CD4-positive, alpha-beta memory T cell (primary cell): ENCODE measurements at regions of chr1 and their contacts with region 1.

Region 1: DNA sequence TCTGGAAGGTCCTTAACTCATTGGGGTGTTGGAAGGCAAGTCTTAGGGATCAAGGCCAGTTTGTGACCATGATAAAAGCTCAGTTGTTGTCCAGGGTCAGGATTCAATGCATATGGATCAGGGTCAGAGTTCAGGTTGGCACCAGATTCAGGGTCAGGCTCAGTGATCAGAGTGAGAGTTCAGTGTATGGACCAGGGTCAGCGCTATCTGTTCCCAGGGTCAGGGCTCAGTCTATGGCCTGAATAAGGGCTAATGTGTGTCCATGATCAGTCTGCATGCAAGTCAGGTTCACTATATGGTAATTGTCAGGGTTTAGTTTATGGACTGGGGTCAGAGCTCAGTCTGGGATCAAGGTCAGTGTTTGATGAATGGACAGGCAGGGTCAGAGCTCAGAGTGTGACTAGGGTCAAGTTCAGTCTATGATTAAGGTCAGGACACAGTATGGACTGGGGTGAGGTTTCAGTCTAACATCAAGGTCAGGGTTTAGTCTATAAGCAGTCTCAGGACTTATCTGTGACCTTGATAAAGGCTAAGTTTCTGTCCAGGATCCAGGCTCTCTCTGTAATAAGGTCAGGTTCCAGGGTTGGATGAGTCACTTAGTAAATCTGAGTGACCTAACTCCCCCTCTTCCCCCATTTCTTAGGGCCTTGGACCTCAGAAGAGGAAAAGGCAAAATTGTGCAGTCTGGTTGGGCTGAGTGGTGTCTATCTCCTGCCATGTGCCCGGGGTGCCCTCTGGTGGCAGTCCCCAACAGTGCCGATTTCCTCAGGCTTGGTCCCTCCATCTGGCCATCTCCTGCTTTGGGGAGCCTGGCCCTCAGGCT is 23.8 kb downstream of the KNCN start:
- DNase-seq: peak; percentile 61 to 69 (median 64)
- H3K4me3 ChIP-seq: no peak overlapping the region
- H3K4me3 Mint-ChIP-seq: peak overlapping the region in 2 of 8 donors; percentile 7 to 45
- H3K27ac ChIP-seq: no peak overlapping the region
- H3K27ac Mint-ChIP-seq: peak overlapping the region in 1 of 7 donors; percentile 71
- H3K4me1 ChIP-seq: peaks cover 1% of the 10 kb centered on the region
- H3K4me1 Mint-ChIP-seq: peaks cover 1 to 16% (median 5%) of the 10 kb centered on the region in 4 donors
- H3K27me3 ChIP-seq: no peaks in the 10 kb centered on the region
- H3K27me3 Mint-ChIP-seq: peaks cover 19 to 26% of the 10 kb centered on the region in 2 donors

Region 2: GRCh38 chr1:46406881-46407608 is 120.6 kb before region 1 on chr1:
- CTCF ChIA-PET with region 1: interaction called, 39 read pairs
- POLR2A ChIA-PET with region 1: no interaction called
- intact Hi-C with region 1: loop called (anchors 1 kb)
- DNase-seq: no peak
- H3K4me3 ChIP-seq: no peak overlapping the region
- H3K4me3 Mint-ChIP-seq: peak overlapping the region in 3 of 8 donors; percentile 38 to 58 (median 41)
- H3K27ac ChIP-seq: no peak overlapping the region
- H3K27ac Mint-ChIP-seq: peak overlapping the region in 6 of 7 donors; percentile 9 to 79 (median 60)
- H3K4me1 ChIP-seq: peaks cover 16% of the 10 kb centered on the region
- H3K4me1 Mint-ChIP-seq: peaks cover 4 to 8% (median 7%) of the 10 kb centered on the region in 4 donors
- H3K27me3 ChIP-seq: no peaks in the 10 kb centered on the region
- H3K27me3 Mint-ChIP-seq: no peaks in the 10 kb centered on the region

Region 3: DNA sequence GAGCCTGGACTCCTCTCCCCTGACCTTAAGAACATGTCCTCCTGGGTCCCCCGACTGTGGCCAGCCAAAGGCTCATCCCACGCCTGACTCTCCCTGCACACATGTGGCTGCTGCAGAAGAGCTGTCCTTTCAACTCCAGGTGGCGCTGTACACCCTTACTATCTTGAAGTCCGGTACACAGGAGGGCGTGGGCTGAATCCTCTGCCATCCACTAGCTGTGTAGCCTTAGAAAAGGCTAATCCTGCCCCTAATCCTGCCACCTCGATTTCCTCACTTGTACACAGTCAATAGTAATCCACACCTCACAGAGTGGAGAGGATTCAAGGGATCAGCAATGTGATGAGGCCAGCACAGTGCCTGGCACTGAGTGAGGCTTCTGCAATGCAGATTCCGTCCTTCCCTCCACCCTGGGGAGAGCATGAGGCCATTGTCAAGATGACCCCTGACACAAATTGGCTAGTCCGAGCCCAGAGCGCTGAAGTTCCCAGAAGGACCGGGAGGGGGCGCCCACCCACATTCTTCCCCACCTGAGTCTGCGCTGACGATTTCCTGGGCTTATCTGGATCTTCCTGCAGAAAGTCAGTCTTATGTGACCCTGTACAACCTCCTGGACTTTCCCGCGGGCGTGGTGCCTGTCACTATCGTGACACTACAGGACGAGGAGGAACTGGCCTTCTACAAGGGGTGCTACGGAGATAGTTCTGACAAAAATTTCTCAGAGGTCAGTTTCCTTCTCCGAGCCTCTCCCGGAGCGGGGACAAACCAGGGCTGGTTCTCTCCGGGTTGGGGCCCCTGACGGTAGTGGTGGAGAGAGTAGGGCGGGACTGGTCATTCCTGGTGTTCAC is 85.1 kb before region 1 on chr1:
- CTCF ChIA-PET with region 1: interaction called, 67 read pairs
- POLR2A ChIA-PET with region 1: no interaction called
- intact Hi-C with region 1: loop called (anchors 1 kb)
- DNase-seq: peak; percentile 57 to 64 (median 59)
- H3K4me3 ChIP-seq: peak overlapping the region; percentile 63 to 66
- H3K4me3 Mint-ChIP-seq: peak overlapping the region; percentile 85 to 92 (median 88)
- H3K27ac ChIP-seq: no peak overlapping the region
- H3K27ac Mint-ChIP-seq: peak overlapping the region in 6 of 7 donors; percentile 46 to 85 (median 70)
- H3K4me1 ChIP-seq: peaks cover 15% of the 10 kb centered on the region
- H3K4me1 Mint-ChIP-seq: peaks cover 14 to 32% (median 17%) of the 10 kb centered on the region in 4 donors
- H3K27me3 ChIP-seq: peaks cover under 1% of the 10 kb centered on the region
- H3K27me3 Mint-ChIP-seq: peaks cover 14 to 15% of the 10 kb centered on the region in 2 donors

Region 4: GRCh38 chr1:46512135-46512791 is 15.4 kb before region 1 on chr1:
- CTCF ChIA-PET with region 1: interaction called, 11 read pairs
- POLR2A ChIA-PET with region 1: no interaction called
- intact Hi-C with region 1: no loop called
- DNase-seq: no peak
- H3K4me3 ChIP-seq: no peak overlapping the region
- H3K4me3 Mint-ChIP-seq: no peak overlapping the region
- H3K27ac ChIP-seq: no peak overlapping the region
- H3K27ac Mint-ChIP-seq: no peak overlapping the region
- H3K4me1 ChIP-seq: no peaks in the 10 kb centered on the region
- H3K4me1 Mint-ChIP-seq: peaks cover 0 to 4% (median under 1%) of the 10 kb centered on the region in 4 donors
- H3K27me3 ChIP-seq: no peaks in the 10 kb centered on the region
- H3K27me3 Mint-ChIP-seq: peaks cover 18 to 51% of the 10 kb centered on the region in 2 donors

Region 5: DNA sequence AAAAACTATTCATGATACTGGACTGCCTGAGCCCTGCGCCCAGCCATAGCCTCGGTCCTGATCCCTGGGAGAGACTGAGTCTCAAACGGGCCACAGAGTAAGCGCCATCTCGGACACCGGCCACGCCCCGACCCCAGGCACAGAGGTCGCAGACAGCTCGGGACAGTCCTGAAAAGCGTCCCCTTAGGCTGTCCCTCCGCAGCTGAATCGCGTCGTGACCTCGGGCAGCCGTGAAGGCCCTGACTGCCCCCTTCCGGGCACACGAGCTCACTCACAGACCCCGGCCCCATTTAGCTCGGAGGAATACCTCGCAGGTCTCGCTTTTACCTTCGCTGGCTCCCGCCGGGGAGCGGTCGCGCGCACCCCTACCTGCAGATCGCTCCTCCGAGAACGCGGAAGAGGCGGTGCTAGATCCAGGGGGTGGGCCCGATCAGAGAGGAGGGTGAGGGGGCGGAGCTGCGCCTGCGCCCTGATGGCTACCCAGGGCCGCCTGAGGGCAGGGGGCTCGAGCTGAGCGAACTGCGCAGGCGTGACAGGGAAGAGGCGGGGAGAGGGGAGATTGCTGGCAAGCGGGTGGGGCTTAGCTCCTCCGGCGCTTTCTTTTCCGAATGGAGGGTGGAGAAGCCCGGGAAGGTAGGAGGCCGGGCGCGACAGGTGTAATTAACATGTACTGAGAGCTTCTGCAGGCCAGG is 76.3 kb after region 1 on chr1 and contains the start of gene MKNK1:
- CTCF ChIA-PET with region 1: interaction called, 4 read pairs
- POLR2A ChIA-PET with region 1: interaction called, 4 read pairs
- intact Hi-C with region 1: loop called (anchors 10 kb)
- DNase-seq: peak; percentile 98 to 99 (median 99)
- H3K4me3 ChIP-seq: peak within 1 kb of the TSS; percentile 63 to 86
- H3K4me3 Mint-ChIP-seq: peak within 1 kb of the TSS; percentile 93 to 97 (median 94)
- H3K27ac ChIP-seq: peak within 1 kb of the TSS; percentile 71
- H3K27ac Mint-ChIP-seq: peak within 1 kb of the TSS; percentile 90 to 97 (median 95)
- H3K4me1 ChIP-seq: peaks cover 57% of the 10 kb centered on the region
- H3K4me1 Mint-ChIP-seq: peaks cover 49 to 77% (median 63%) of the 10 kb centered on the region in 4 donors
- H3K27me3 ChIP-seq: no peaks in the 10 kb centered on the region
- H3K27me3 Mint-ChIP-seq: no peaks in the 10 kb centered on the region
- total RNA-seq, gene MKNK1: 54.3 to 54.9 TPM

Region 6: GRCh38 chr1:46724991-46725735 is 197.5 kb after region 1 on chr1:
- CTCF ChIA-PET with region 1: interaction called, 19 read pairs
- POLR2A ChIA-PET with region 1: interaction called, 11 read pairs
- intact Hi-C with region 1: no loop called
- DNase-seq: peak; percentile 71 to 74 (median 73)
- H3K4me3 ChIP-seq: no peak overlapping the region
- H3K4me3 Mint-ChIP-seq: no peak overlapping the region
- H3K27ac ChIP-seq: no peak overlapping the region
- H3K27ac Mint-ChIP-seq: no peak overlapping the region
- H3K4me1 ChIP-seq: peaks cover 4% of the 10 kb centered on the region
- H3K4me1 Mint-ChIP-seq: peaks cover 4 to 9% (median 5%) of the 10 kb centered on the region in 4 donors
- H3K27me3 ChIP-seq: no peaks in the 10 kb centered on the region
- H3K27me3 Mint-ChIP-seq: peaks cover 17 to 25% of the 10 kb centered on the region in 2 donors